ENCODE measurements at regions of chr20 and their contacts with region 1.

Region 1: GRCh38 chr20:9756660-9757059 is 82.2 kb downstream of the PAK5 start:
- DNase-seq: no peak
- H3K4me3 ChIP-seq: no peak overlapping the region
- H3K27ac ChIP-seq: no peak overlapping the region
- H3K4me1 ChIP-seq: no peaks in the 10 kb centered on the region
- H3K27me3 ChIP-seq: no peaks in the 10 kb centered on the region
- CTCF ChIP-seq: no peak
- POLR2A ChIP-seq: no peak

Region 2: GRCh38 chr20:9903048-9903655 is 146.5 kb after region 1 on chr20:
- intact Hi-C with region 1: loop called (anchors 1 kb)
- DNase-seq: no peak
- H3K4me3 ChIP-seq: no peak overlapping the region
- H3K27ac ChIP-seq: no peak overlapping the region
- H3K4me1 ChIP-seq: no peaks in the 10 kb centered on the region
- H3K27me3 ChIP-seq: peaks cover 0 to 10% (median 0%) of the 10 kb centered on the region in 7 donors
- CTCF ChIP-seq: peak in 1 of 11 experiments; percentile 11
- POLR2A ChIP-seq: no peak

Region 3: GRCh38 chr20:9930142-9930541 is 173.5 kb after region 1 on chr20:
- intact Hi-C with region 1: no loop called
- DNase-seq: no peak
- H3K4me3 ChIP-seq: no peak overlapping the region
- H3K27ac ChIP-seq: no peak overlapping the region
- H3K4me1 ChIP-seq: no peaks in the 10 kb centered on the region
- H3K27me3 ChIP-seq: no peaks in the 10 kb centered on the region
- CTCF ChIP-seq: no peak
- POLR2A ChIP-seq: no peak

Measured in spleen (tissue), 13 donors.